CD8-positive, alpha-beta T cell (primary cell): ENCODE measurements at regions of chr2 and their contacts with region 1.

Region 1: DNA sequence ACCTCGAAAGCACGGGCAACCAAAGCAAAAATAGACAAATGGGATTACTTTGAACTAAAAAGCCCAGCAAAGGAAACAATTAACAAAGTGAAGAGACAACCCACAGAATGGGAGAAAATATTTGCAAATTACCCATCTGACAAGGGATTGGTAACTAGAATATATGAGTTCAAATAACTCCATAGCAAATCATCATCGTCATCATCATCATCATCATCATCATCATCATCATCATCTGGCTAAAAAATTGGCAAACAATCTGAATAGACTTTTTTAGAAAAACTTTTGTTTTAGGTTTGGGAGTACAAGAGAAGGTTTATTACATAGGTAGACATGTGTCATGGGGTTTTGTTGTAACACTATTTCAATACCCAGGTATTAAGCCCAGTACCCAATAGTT is 1239.3 kb upstream of the FAM98A start:
- DNase-seq: no peak
- ATAC-seq: no peak
- H3K4me3 ChIP-seq: no peak overlapping the region
- H3K4me3 Mint-ChIP-seq: no peak overlapping the region
- H3K27ac ChIP-seq: no peak overlapping the region
- H3K27ac Mint-ChIP-seq: no peak overlapping the region
- H3K4me1 ChIP-seq: no peaks in the 10 kb centered on the region
- H3K4me1 Mint-ChIP-seq: no peaks in the 10 kb centered on the region
- H3K27me3 ChIP-seq: no peaks in the 10 kb centered on the region
- H3K27me3 Mint-ChIP-seq: no peaks in the 10 kb centered on the region
- CTCF ChIP-seq: no peak

Region 2: DNA sequence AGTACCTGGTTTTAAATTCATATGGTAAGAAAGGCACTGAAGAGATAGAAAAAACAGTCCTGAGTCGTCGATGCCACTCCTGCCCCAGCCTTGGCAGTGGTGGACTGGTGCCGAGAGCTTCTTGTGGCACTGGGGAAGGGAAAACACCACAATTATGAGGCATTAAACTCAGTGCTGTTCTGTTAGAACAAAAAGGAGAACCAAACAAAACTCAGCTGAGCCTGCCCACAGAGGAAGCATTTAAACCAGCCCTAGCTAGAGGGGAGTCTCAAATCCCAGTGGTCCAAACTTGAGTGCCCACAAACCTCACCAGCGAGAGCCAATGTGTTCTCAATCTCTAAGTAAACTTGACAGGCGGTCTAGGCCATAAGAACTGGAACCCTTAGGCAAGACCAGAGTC is 15.2 kb after region 1 on chr2:
- CTCF ChIA-PET with region 1: no interaction called
- POLR2A ChIA-PET with region 1: no interaction called
- intact Hi-C with region 1: no loop called
- DNase-seq: no peak
- ATAC-seq: no peak
- H3K4me3 ChIP-seq: no peak overlapping the region
- H3K4me3 Mint-ChIP-seq: no peak overlapping the region
- H3K27ac ChIP-seq: no peak overlapping the region
- H3K27ac Mint-ChIP-seq: no peak overlapping the region
- H3K4me1 ChIP-seq: no peaks in the 10 kb centered on the region
- H3K4me1 Mint-ChIP-seq: no peaks in the 10 kb centered on the region
- H3K27me3 ChIP-seq: no peaks in the 10 kb centered on the region
- H3K27me3 Mint-ChIP-seq: no peaks in the 10 kb centered on the region
- CTCF ChIP-seq: no peak

Region 3: DNA sequence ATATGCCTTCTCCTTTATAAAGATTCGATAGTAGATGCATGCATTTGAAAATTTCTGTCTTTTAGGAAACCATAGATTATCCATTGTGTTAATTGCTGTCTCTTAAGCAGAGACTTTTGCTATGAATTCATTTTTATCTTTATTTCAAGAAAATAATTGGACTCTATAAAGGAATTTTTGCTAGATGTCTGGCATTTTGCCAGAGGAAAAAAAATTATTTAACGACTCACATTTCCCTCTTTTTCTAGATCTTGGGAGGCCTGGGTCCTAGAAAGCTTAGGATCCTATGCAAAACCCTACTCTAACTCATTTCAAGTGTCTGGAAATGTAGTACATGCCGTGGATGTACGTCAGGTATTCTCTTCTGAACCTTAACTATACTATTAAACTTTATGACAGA is 29.7 kb after region 1 on chr2:
- CTCF ChIA-PET with region 1: no interaction called
- POLR2A ChIA-PET with region 1: no interaction called
- intact Hi-C with region 1: loop called in 1 of 2 experiments (anchors 2 kb)
- DNase-seq: no peak
- ATAC-seq: no peak
- H3K4me3 ChIP-seq: no peak overlapping the region
- H3K4me3 Mint-ChIP-seq: no peak overlapping the region
- H3K27ac ChIP-seq: no peak overlapping the region
- H3K27ac Mint-ChIP-seq: no peak overlapping the region
- H3K4me1 ChIP-seq: no peaks in the 10 kb centered on the region
- H3K4me1 Mint-ChIP-seq: no peaks in the 10 kb centered on the region
- H3K27me3 ChIP-seq: no peaks in the 10 kb centered on the region
- H3K27me3 Mint-ChIP-seq: no peaks in the 10 kb centered on the region
- CTCF ChIP-seq: no peak